Aorta (tissue), 5 donors: ENCODE measurements at regions of chr12 and their contacts with region 1.

Region 1: GRCh38 chr12:111607239-111607638 is 8.1 kb upstream of the ATXN2 start:
- DNase-seq: no peak
- ATAC-seq: no peak
- H3K4me3 ChIP-seq: no peak overlapping the region
- H3K27ac ChIP-seq: no peak overlapping the region
- H3K4me1 ChIP-seq: no peaks in the 10 kb centered on the region
- H3K27me3 ChIP-seq: no peaks in the 10 kb centered on the region

Region 2: DNA sequence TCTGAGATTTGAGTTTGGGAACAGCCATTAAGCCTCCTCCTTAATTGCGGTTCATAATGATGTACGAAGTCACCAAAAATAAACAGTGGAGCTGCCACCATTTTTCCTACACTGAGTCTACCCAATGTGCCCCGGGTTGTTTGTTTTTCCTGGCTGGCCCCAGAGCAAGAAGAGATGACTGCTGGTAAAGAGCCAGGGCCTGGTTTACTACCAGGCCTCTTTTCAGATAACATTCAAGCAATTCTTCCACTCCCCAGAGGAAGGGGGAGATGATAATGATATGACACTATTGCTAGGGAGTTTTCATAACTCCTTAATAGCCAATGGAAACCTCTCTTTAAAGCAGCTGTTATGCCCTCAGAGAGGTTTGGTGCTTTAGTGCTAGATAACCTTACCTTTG is 36.2 kb after region 1 on chr12:
- intact Hi-C with region 1: loop called in 1 of 2 experiments (anchors 5 kb)
- DNase-seq: no peak
- ATAC-seq: peak; percentile 66
- H3K4me3 ChIP-seq: no peak overlapping the region
- H3K27ac ChIP-seq: peak overlapping the region in 1 of 2 donors; percentile 33
- H3K4me1 ChIP-seq: peaks cover 3% of the 10 kb centered on the region in 2 donors
- H3K27me3 ChIP-seq: no peaks in the 10 kb centered on the region